ENCODE measurements at regions of chr1 and their contacts with region 1.

Region 1: DNA sequence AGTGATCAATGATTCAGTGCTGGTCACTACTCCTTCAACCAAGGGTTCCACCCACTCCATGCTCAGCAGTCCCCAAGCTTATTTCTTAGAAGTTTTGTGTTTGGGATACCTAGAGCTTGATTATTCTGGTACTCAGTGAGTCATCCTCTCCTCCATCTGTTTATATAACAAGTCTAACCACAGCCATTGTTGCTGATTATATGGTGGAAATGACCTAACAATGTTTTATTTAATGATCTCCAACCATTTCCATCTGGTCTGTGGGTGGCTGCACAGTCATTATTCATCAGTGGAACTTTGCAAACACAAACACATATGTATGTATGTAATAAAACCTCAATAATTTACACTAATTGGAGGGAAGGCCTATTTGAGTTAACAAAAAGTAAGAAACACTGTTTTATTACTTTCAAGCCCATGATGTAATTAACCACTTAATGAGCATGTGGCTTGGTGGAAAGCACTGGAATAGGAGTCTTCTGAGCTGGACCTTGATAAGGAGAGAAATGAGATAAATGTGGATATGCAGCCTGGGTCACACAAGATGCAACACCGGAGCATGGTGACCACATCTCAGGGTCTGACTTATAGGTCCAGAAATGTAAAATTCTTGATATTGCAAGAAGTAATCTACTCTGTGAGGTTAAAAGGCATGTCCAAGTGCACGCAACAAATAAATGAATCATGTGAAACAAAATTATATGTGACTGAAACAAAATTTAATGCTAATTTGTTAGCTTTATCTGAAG is 99.0 kb upstream of the WLS start:
- DNase-seq: peak; percentile 84
- H3K4me3 ChIP-seq: no peak overlapping the region
- H3K27ac ChIP-seq: peak overlapping the region; percentile 54
- H3K27me3 ChIP-seq: no peaks in the 10 kb centered on the region
- CTCF ChIP-seq: no peak

Region 2: GRCh38 chr1:68111519-68112436 is 219.5 kb before region 1 on chr1:
- CTCF ChIA-PET with region 1: interaction called, 473 read pairs
- POLR2A ChIA-PET with region 1: no interaction called
- DNase-seq: peak; percentile 77
- H3K4me3 ChIP-seq: no peak overlapping the region
- H3K27ac ChIP-seq: peak overlapping the region; percentile 22
- H3K27me3 ChIP-seq: no peaks in the 10 kb centered on the region
- CTCF ChIP-seq: peak; percentile 79

Region 3: GRCh38 chr1:68293609-68294366 is 37.5 kb before region 1 on chr1:
- CTCF ChIA-PET with region 1: no interaction called
- POLR2A ChIA-PET with region 1: no interaction called
- DNase-seq: no peak
- H3K4me3 ChIP-seq: no peak overlapping the region; the same call in 1 of the 2 replicates
- H3K27ac ChIP-seq: peak overlapping the region; percentile 39
- H3K27me3 ChIP-seq: peaks cover 2% of the 10 kb centered on the region
- CTCF ChIP-seq: no peak

Region 4: GRCh38 chr1:68355614-68356013 is 24.3 kb after region 1 on chr1:
- CTCF ChIA-PET with region 1: no interaction called
- POLR2A ChIA-PET with region 1: no interaction called
- DNase-seq: no peak
- H3K4me3 ChIP-seq: no peak overlapping the region
- H3K27ac ChIP-seq: no peak overlapping the region
- H3K27me3 ChIP-seq: no peaks in the 10 kb centered on the region
- CTCF ChIP-seq: no peak

Region 5: GRCh38 chr1:68979891-68980290 is 648.6 kb after region 1 on chr1:
- CTCF ChIA-PET with region 1: no interaction called
- POLR2A ChIA-PET with region 1: no interaction called
- DNase-seq: no peak
- H3K4me3 ChIP-seq: no peak overlapping the region
- H3K27ac ChIP-seq: no peak overlapping the region
- H3K27me3 ChIP-seq: no peaks in the 10 kb centered on the region
- CTCF ChIP-seq: no peak

Measured in AG04450 (cell line).